Activated T-helper 1 cell treated with anti-CD3 and anti-CD28 coated beads, Interleukin-12 subunit alpha, Interleukin-12 subunit beta, Interleukin-2, Interleukin-4 antibody, amounts not matched to agents 30 ng/mL and 10 ng/mL and 1 ng/mL, durations not matched to agents 14 hours and 24 hours and 36 hours (primary cell): ENCODE measurements at regions of chr2 and their contacts with region 1.

Region 1: GRCh38 chr2:84874381-84875212 is 6.3 kb downstream of the TRABD2A start:
- DNase-seq: no peak
- H3K4me3 Mint-ChIP-seq: peak overlapping the region; percentile 67
- H3K27ac Mint-ChIP-seq: peak overlapping the region; percentile 88
- H3K4me1 Mint-ChIP-seq: peaks cover 73% of the 10 kb centered on the region
- H3K27me3 Mint-ChIP-seq: no peaks in the 10 kb centered on the region

Region 2: DNA sequence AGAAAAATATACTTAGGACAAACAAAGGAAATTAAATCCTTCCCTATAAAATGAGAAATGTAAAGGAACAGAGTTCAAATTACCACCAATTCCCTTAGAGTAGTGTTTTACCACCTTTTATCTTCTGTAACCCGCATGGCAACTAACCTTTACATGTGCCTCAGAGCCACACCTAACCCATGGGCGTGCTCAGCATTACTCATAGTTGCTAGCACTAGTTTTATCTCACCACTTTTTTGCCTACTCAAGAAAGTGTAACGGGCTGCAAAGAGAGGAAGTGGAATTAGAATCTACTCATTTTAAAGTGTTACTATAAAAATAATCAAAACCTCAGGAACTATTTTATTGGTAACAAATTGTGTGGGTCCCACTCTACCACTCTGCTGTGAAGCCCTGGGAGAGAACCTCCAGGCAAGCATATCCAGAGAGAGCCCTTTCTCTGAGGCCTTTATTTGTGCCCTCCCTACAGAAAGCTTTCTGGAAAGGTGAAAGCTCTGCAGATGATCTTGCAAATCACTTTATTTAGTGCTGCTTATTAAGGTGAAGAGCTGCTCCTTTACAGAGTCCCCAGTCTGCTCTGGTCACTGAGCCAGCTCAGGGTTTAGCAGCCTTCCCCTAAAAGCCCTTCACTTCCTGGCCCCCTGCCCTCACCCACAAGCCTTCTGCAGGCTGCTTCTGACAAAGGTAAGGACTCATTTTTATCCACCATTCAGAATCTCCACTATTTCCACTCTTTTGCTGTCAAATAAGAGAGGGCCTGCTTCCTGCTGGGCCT is 92.5 kb before region 1 on chr2:
- intact Hi-C with region 1: loop called (anchors 2 kb)
- DNase-seq: peak; percentile 44
- H3K4me3 Mint-ChIP-seq: no peak overlapping the region
- H3K27ac Mint-ChIP-seq: peak overlapping the region; percentile 85
- H3K4me1 Mint-ChIP-seq: peaks cover 69% of the 10 kb centered on the region
- H3K27me3 Mint-ChIP-seq: no peaks in the 10 kb centered on the region